ENCODE measurements at regions of chr3 and their contacts with region 1.

Region 1: DNA sequence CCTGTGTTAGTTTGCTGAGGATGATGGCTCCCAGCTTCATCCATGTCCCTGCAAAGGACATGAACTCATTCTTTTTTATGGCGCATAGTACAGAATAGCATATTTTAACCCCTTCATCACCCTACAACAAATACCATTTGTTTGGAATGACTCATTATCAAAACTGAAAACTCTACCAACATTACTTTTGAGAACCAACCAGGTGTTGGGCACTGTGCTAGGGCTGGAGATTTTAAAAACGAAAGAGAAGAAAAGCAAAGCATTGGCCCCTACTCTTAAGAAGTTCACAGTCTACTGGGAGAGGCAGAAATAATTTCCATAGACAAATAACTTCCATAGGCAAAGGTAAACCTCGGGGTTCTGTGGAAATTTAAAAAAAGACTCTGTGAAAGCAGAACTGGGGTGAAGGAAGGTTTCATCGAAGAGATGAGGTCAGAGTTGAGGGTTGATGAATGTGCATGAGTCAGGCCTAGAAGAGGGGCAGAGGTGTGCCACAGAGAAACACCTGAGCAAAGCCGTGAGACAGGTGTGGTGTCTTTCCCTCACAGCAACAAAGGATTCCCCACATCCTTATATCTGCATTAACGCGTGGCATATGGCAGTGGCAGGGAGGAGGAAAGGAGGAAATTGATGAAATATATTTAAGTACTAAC is 51.0 kb downstream of the MCF2L2 start:
- DNase-seq: no peak
- H3K4me3 ChIP-seq: no peak overlapping the region
- H3K27ac ChIP-seq: no peak overlapping the region
- H3K4me1 ChIP-seq: no peaks in the 10 kb centered on the region; a peak in 1 of 7 replicates
- H3K27me3 ChIP-seq: no peaks in the 10 kb centered on the region
- CTCF ChIP-seq: no peak
- EP300 ChIP-seq: no peak
- POLR2A ChIP-seq: no peak
- RAD21 ChIP-seq: no peak

Region 2: DNA sequence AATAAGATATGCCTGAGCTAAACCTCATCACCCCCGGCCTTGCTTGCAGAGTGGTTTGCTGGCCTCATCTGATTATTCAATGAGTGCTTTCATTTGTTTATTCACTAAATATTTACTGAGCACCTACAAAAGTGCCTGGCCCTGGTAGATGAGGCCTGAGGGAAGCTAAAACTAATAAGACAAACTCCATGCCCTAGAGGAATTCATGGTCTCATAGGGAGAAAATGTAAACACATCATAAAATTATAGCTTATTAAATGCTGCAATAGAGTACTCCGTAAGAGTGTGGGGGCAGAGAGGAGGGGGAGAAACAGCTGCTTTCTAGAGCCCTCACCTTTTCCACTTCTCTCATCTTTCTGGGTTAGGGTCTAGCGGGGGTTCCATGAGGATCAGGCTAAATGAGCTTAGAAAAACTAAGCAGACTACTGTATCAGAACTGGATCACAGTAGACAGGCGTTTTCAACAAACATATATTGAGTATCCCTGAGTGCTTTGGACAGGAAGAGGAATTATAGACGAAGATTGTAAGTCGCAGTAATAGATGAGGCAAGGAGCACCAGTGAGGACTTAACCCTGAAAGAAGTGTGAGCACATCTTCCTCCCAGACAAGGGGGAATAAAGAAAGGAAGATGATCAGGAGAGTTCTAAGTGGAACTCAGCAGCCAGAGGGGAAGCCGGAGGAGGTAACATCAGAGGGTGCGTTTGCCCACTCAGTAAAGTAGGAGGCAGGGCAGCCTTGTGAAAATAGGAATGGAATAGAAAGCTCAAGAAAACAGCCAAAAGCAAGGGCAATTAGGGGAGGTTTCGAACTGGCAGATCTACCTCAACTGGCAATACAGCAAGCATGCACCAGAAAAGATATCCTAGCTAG is 183.4 kb before region 1 on chr3:
- CTCF ChIA-PET with region 1: interaction called, 222 read pairs
- POLR2A ChIA-PET with region 1: no interaction called
- DNase-seq: no peak
- H3K4me3 ChIP-seq: no peak overlapping the region
- H3K27ac ChIP-seq: no peak overlapping the region
- H3K4me1 ChIP-seq: peaks cover 0 to 3% (median 0%) of the 10 kb centered on the region in 4 experiments; a peak in 1 of 7 replicates
- H3K27me3 ChIP-seq: no peaks in the 10 kb centered on the region
- CTCF ChIP-seq: no peak
- EP300 ChIP-seq: no peak
- POLR2A ChIP-seq: no peak
- RAD21 ChIP-seq: no peak

Region 3: GRCh38 chr3:183222631-183223235 is 154.7 kb before region 1 on chr3:
- CTCF ChIA-PET with region 1: interaction called, 10 read pairs
- POLR2A ChIA-PET with region 1: no interaction called
- DNase-seq: no peak
- H3K4me3 ChIP-seq: no peak overlapping the region
- H3K27ac ChIP-seq: no peak overlapping the region
- H3K4me1 ChIP-seq: no peaks in the 10 kb centered on the region
- H3K27me3 ChIP-seq: no peaks in the 10 kb centered on the region
- CTCF ChIP-seq: no peak
- EP300 ChIP-seq: no peak
- POLR2A ChIP-seq: no peak
- RAD21 ChIP-seq: no peak

Region 4: GRCh38 chr3:183349421-183350157 is 27.8 kb before region 1 on chr3:
- CTCF ChIA-PET with region 1: no interaction called
- POLR2A ChIA-PET with region 1: no interaction called
- DNase-seq: no peak
- H3K4me3 ChIP-seq: no peak overlapping the region
- H3K27ac ChIP-seq: no peak overlapping the region
- H3K4me1 ChIP-seq: no peaks in the 10 kb centered on the region
- H3K27me3 ChIP-seq: no peaks in the 10 kb centered on the region
- CTCF ChIP-seq: no peak
- EP300 ChIP-seq: no peak
- POLR2A ChIP-seq: no peak
- RAD21 ChIP-seq: no peak

Region 5: GRCh38 chr3:183447206-183448001 is 70.0 kb after region 1 on chr3:
- CTCF ChIA-PET with region 1: no interaction called
- POLR2A ChIA-PET with region 1: no interaction called
- DNase-seq: peak; percentile 94 to 95
- H3K4me3 ChIP-seq: peak overlapping the region; percentile 80 to 95 (median 92)
- H3K27ac ChIP-seq: peak overlapping the region; percentile 67; the same call in 1 of the 2 replicates
- H3K4me1 ChIP-seq: no peaks in the 10 kb centered on the region
- H3K27me3 ChIP-seq: no peaks in the 10 kb centered on the region
- CTCF ChIP-seq: no peak
- EP300 ChIP-seq: peak in 1 of 2 experiments; percentile 4; a peak in 1 of 3 replicates
- POLR2A ChIP-seq: peak; percentile 93 to 97
- RAD21 ChIP-seq: no peak; a peak in 1 of 4 replicates

Region 6: DNA sequence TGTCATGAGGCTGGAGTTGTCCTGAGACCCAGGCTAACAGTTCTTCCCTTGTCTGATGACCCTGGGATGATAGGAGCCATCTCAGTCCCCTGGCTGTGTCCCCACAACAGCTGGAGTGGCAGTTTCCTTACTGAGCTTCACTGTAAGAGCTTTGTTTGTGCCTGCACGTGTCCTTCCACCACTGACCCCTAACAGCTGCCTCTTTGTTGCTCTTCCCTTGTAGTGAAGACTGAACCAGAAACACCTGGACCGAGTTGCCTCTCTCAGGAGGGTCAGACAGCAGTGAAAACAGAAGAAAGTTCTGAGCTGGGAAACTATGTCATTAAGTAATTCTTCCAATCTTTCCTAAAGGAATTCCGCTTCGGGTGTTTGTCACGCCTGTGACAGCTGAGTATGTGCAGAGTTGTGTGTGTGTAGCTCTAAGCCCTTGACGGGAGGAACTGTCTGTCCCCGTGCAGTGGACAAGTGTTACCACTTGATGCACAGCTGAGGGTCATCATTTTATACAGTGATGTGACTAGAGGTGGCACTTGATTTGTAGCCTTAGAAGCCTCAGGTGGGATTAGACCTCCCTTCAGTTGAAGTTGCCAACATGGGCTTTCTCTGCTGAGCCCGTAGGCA is 422.9 kb after region 1 on chr3:
- CTCF ChIA-PET with region 1: no interaction called
- POLR2A ChIA-PET with region 1: no interaction called
- DNase-seq: no peak
- H3K4me3 ChIP-seq: no peak overlapping the region
- H3K27ac ChIP-seq: no peak overlapping the region
- H3K4me1 ChIP-seq: no peaks in the 10 kb centered on the region
- H3K27me3 ChIP-seq: no peaks in the 10 kb centered on the region
- CTCF ChIP-seq: no peak
- EP300 ChIP-seq: no peak
- POLR2A ChIP-seq: no peak
- RAD21 ChIP-seq: no peak